Activated T-helper 1 cell treated with anti-CD3 and anti-CD28 coated beads, Interleukin-12 subunit alpha, Interleukin-12 subunit beta, Interleukin-2, Interleukin-4 antibody, amounts not matched to agents 30 ng/mL and 10 ng/mL and 1 ng/mL, durations not matched to agents 14 hours and 24 hours and 36 hours (primary cell): ENCODE measurements at regions of chr9 and their contacts with region 1.

Region 1: GRCh38 chr9:14347406-14348122 is 33.6 kb upstream of the NFIB start:
- DNase-seq: no peak
- H3K4me3 Mint-ChIP-seq: no peak overlapping the region
- H3K27ac Mint-ChIP-seq: no peak overlapping the region
- H3K4me1 Mint-ChIP-seq: no peaks in the 10 kb centered on the region
- H3K27me3 Mint-ChIP-seq: peaks cover 49% of the 10 kb centered on the region

Region 2: GRCh38 chr9:14314929-14315645 is 32.5 kb before region 1 on chr9:
- intact Hi-C with region 1: loop called (anchors 1 kb)
- DNase-seq: no peak
- H3K4me3 Mint-ChIP-seq: peak overlapping the region; percentile 79
- H3K27ac Mint-ChIP-seq: no peak overlapping the region
- H3K4me1 Mint-ChIP-seq: peaks cover 16% of the 10 kb centered on the region
- H3K27me3 Mint-ChIP-seq: peaks cover 61% of the 10 kb centered on the region

Region 3: GRCh38 chr9:14441976-14442651 is 94.5 kb after region 1 on chr9:
- intact Hi-C with region 1: no loop called
- DNase-seq: no peak
- H3K4me3 Mint-ChIP-seq: no peak overlapping the region
- H3K27ac Mint-ChIP-seq: no peak overlapping the region
- H3K4me1 Mint-ChIP-seq: no peaks in the 10 kb centered on the region
- H3K27me3 Mint-ChIP-seq: peaks cover 4% of the 10 kb centered on the region